ENCODE measurements at regions of chr2 and their contacts with region 1.

Region 1: DNA sequence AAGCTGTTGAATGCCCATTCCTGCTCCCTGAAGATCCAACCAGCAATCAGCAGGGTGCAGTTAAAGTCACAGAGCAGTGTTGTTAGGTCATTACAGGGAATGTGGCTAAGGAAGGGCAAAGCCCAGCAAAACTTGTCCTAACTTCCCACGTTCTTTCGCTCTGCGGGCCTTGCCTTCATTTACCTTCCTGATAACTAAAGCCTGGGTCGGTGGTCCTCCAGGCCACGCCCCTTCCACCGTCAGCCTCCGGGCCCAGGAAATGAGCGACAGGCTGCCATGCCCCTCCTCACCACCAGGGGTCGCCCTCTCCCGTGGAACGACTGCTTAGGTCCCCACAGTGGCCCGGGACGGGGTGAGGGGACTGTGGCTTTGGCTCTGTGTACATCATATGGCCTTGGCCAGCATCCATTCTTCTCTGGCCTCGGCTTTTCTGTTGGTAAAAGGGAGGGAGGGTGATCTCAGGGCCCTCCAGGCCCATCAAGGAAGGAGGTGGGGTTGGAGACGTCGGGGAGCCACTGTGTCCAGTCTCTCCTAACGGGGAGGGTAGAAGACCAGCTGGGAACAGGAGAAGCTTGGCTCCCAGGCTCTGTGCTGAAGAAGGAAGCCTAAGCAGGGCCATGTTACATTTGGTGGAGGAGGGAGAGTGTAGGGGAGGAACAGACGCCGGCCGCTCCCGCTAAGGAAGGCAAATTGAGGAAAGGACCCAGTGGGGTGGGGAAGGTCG is 2.2 kb downstream of the SH2D6 start:
- DNase-seq: peak; percentile 73 to 96 (median 83)
- ATAC-seq: peak; percentile 88
- H3K4me3 ChIP-seq: peak overlapping the region; percentile 22
- H3K4me3 Mint-ChIP-seq: peak overlapping the region; percentile 60 to 96 (median 76)
- H3K27ac ChIP-seq: peak overlapping the region; percentile 23
- H3K27ac Mint-ChIP-seq: peak overlapping the region; percentile 38 to 100 (median 85)
- H3K4me1 ChIP-seq: peaks cover 20 to 22% of the 10 kb centered on the region in 2 donors
- H3K4me1 Mint-ChIP-seq: peaks cover 14 to 26% (median 16%) of the 10 kb centered on the region in 7 donors
- H3K27me3 ChIP-seq: no peaks in the 10 kb centered on the region
- H3K27me3 Mint-ChIP-seq: no peaks in the 10 kb centered on the region

Region 2: GRCh38 chr2:85354286-85355072 is 66.2 kb before region 1 on chr2 and contains the starts of genes ELMOD3 and RETSAT:
- CTCF ChIA-PET with region 1: interaction called, 3 read pairs
- POLR2A ChIA-PET with region 1: interaction called, 16 read pairs
- intact Hi-C with region 1: loop called (anchors 1 kb)
- DNase-seq: peak; percentile 79 to 99 (median 98)
- ATAC-seq: peak; percentile 99
- H3K4me3 ChIP-seq: peak within 1 kb of the TSS; percentile 86
- H3K4me3 Mint-ChIP-seq: peak within 1 kb of the TSS; percentile 91 to 100 (median 100)
- H3K27ac ChIP-seq: peak within 1 kb of the TSS; percentile 89
- H3K27ac Mint-ChIP-seq: peak within 1 kb of the TSS; percentile 93 to 100 (median 99)
- H3K4me1 ChIP-seq: peaks cover 19 to 28% of the 10 kb centered on the region in 2 donors
- H3K4me1 Mint-ChIP-seq: peaks cover 36 to 61% (median 53%) of the 10 kb centered on the region in 7 donors
- H3K27me3 ChIP-seq: no peaks in the 10 kb centered on the region
- H3K27me3 Mint-ChIP-seq: no peaks in the 10 kb centered on the region
- total RNA-seq, gene ELMOD3: 20.2 to 33.3 (median 21.7) TPM
- total RNA-seq, gene RETSAT: 18.5 to 30.5 (median 20.2) TPM

Region 3: GRCh38 chr2:85376291-85377065 is 44.2 kb before region 1 on chr2:
- CTCF ChIA-PET with region 1: no interaction called
- POLR2A ChIA-PET with region 1: no interaction called
- intact Hi-C with region 1: no loop called
- DNase-seq: no peak
- ATAC-seq: no peak
- H3K4me3 ChIP-seq: no peak overlapping the region
- H3K4me3 Mint-ChIP-seq: no peak overlapping the region
- H3K27ac ChIP-seq: no peak overlapping the region
- H3K27ac Mint-ChIP-seq: peak overlapping the region in 1 of 9 donors; percentile 77
- H3K4me1 ChIP-seq: no peaks in the 10 kb centered on the region
- H3K4me1 Mint-ChIP-seq: no peaks in the 10 kb centered on the region
- H3K27me3 ChIP-seq: no peaks in the 10 kb centered on the region
- H3K27me3 Mint-ChIP-seq: no peaks in the 10 kb centered on the region

Region 4: GRCh38 chr2:85437488-85438284 is 17.0 kb after region 1 on chr2:
- CTCF ChIA-PET with region 1: interaction called, 5 read pairs
- POLR2A ChIA-PET with region 1: interaction called, 32 read pairs
- intact Hi-C with region 1: loop called (anchors 1 kb)
- DNase-seq: peak; percentile 65 to 78 (median 75)
- ATAC-seq: peak; percentile 87
- H3K4me3 ChIP-seq: peak overlapping the region; percentile 65
- H3K4me3 Mint-ChIP-seq: peak overlapping the region; percentile 86 to 95 (median 91)
- H3K27ac ChIP-seq: peak overlapping the region; percentile 82
- H3K27ac Mint-ChIP-seq: peak overlapping the region; percentile 90 to 96 (median 94)
- H3K4me1 ChIP-seq: peaks cover 12 to 25% of the 10 kb centered on the region in 2 donors
- H3K4me1 Mint-ChIP-seq: peaks cover 15 to 42% (median 34%) of the 10 kb centered on the region in 7 donors
- H3K27me3 ChIP-seq: no peaks in the 10 kb centered on the region
- H3K27me3 Mint-ChIP-seq: no peaks in the 10 kb centered on the region

Region 5: DNA sequence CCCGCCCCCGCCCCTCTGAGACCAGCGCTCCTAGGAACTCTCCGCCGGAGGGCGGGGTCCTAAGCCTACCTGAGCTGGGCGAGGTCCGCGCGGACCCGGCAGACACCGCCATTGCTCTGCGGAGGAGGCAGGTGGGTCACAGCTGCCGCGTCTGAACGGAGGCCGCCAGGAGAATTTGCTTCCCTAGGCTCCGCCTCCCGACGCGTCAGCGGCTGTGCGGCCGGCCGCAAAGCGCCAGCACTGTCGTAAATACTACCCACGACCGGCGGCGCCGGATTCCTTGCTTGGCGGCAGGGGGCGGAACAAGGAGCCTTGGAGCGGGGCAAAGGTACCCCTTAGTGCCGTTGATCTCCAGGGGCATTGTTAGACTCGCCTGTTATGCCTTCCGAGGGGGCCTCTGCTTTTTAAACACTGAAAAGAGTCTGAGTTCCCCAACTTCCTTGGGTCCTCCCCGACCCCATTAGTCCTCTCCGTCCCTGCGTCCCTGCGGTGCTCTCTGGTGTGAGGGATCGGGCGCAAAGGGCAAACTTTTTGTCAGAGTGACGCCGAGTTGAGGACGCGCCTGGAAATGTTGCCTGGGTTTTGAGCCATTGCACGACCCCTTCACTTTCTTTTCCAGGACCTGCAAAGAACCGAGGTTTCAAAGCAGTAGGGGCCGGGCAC is 140.8 kb after region 1 on chr2 and contains the start of gene GGCX:
- CTCF ChIA-PET with region 1: interaction called, 30 read pairs
- POLR2A ChIA-PET with region 1: interaction called, 22 read pairs
- intact Hi-C with region 1: loop called (anchors 1 to 2 kb)
- DNase-seq: peak; percentile 77 to 92 (median 88)
- ATAC-seq: peak; percentile 98
- H3K4me3 ChIP-seq: peak within 1 kb of the TSS; percentile 98
- H3K4me3 Mint-ChIP-seq: peak within 1 kb of the TSS; percentile 81 to 99 (median 97)
- H3K27ac ChIP-seq: peak within 1 kb of the TSS; percentile 95
- H3K27ac Mint-ChIP-seq: peak within 1 kb of the TSS; percentile 86 to 99 (median 95)
- H3K4me1 ChIP-seq: peaks cover 6 to 8% of the 10 kb centered on the region in 2 donors
- H3K4me1 Mint-ChIP-seq: peaks cover 17 to 48% (median 32%) of the 10 kb centered on the region in 7 donors
- H3K27me3 ChIP-seq: no peaks in the 10 kb centered on the region
- H3K27me3 Mint-ChIP-seq: no peaks in the 10 kb centered on the region
- total RNA-seq, gene GGCX: 20.4 to 34.2 (median 26.3) TPM

Region 6: GRCh38 chr2:85611705-85612587 is 191.2 kb after region 1 on chr2 and contains the start of gene C2orf68:
- CTCF ChIA-PET with region 1: no interaction called
- POLR2A ChIA-PET with region 1: interaction called, 6 read pairs
- intact Hi-C with region 1: loop called (anchors 1 kb)
- DNase-seq: peak; percentile 61 to 92 (median 75)
- ATAC-seq: peak; percentile 76
- H3K4me3 ChIP-seq: peak within 1 kb of the TSS; percentile 65
- H3K4me3 Mint-ChIP-seq: peak within 1 kb of the TSS; percentile 96 to 100 (median 98)
- H3K27ac ChIP-seq: peak within 1 kb of the TSS; percentile 81
- H3K27ac Mint-ChIP-seq: peak within 1 kb of the TSS; percentile 86 to 99 (median 96)
- H3K4me1 ChIP-seq: peaks cover 11 to 16% of the 10 kb centered on the region in 2 donors
- H3K4me1 Mint-ChIP-seq: peaks cover 14 to 52% (median 44%) of the 10 kb centered on the region in 7 donors
- H3K27me3 ChIP-seq: no peaks in the 10 kb centered on the region
- H3K27me3 Mint-ChIP-seq: no peaks in the 10 kb centered on the region
- total RNA-seq, gene C2orf68: 40.9 to 92.1 (median 51.6) TPM

Region 7: GRCh38 chr2:86105252-86105968 is 684.7 kb after region 1 on chr2 and contains the start of gene POLR1A:
- CTCF ChIA-PET with region 1: no interaction called
- POLR2A ChIA-PET with region 1: no interaction called
- intact Hi-C with region 1: loop called (anchors 1 to 5 kb)
- DNase-seq: peak; percentile 61 to 91 (median 89)
- ATAC-seq: peak; percentile 86
- H3K4me3 ChIP-seq: peak within 1 kb of the TSS; percentile 95
- H3K4me3 Mint-ChIP-seq: peak within 1 kb of the TSS; percentile 90 to 97 (median 92)
- H3K27ac ChIP-seq: peak within 1 kb of the TSS; percentile 86
- H3K27ac Mint-ChIP-seq: peak within 1 kb of the TSS; percentile 95 to 100 (median 99)
- H3K4me1 ChIP-seq: peaks cover 20 to 28% of the 10 kb centered on the region in 2 donors
- H3K4me1 Mint-ChIP-seq: peaks cover 37 to 86% (median 76%) of the 10 kb centered on the region in 7 donors
- H3K27me3 ChIP-seq: no peaks in the 10 kb centered on the region
- H3K27me3 Mint-ChIP-seq: no peaks in the 10 kb centered on the region
- total RNA-seq, gene POLR1A: 18.8 to 44.4 (median 21.7) TPM